Mammary epithelial cell (primary cell): ENCODE measurements at regions of chrX and their contacts with region 1.

Region 1: DNA sequence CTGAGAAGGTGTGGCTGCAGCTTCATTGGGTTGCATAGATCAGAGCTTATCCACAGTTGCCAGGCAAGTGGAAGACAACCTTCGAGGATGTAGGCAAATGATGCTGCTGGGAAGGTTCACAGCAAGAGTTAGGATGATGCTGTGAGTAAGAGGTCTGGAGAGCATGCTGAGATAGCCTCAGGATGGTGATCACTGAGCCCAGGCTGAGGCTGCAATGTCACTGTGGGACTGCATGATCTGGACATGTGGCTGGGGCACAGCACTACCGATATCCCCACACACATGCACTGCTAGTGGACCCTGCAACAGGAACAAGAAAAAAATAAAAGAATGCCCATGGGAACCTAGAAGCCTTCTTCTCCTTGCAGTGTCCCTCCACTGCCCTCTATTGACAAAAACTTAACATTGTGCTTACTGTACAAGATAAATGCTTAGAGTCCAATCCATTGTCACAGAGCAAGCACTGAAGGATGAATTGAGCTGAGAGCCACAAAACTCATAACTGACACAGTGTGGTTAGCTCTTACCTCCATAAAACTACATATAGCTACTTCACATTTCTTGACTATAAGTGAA is 105.6 kb downstream of the CNKSR2 start:
- DNase-seq: peak; percentile 30
- H3K4me3 ChIP-seq: no peak overlapping the region
- H3K27ac ChIP-seq: no peak overlapping the region
- H3K4me1 ChIP-seq: no peaks in the 10 kb centered on the region
- H3K27me3 ChIP-seq: no peaks in the 10 kb centered on the region
- CTCF ChIP-seq: peak; percentile 69 to 78

Region 2: GRCh38 chrX:21374163-21374993 is 105.4 kb before region 1 on chrX and contains the start of gene CNKSR2:
- CTCF ChIA-PET with region 1: no interaction called
- dilution Hi-C with region 1: no loop called
- in situ Hi-C with region 1: no loop called
- intact Hi-C with region 1: loop called (anchors 5 kb)
- DNase-seq: peak; percentile 26
- H3K4me3 ChIP-seq: peak within 1 kb of the TSS; percentile 52 to 60 (median 58)
- H3K27ac ChIP-seq: no peak within 1 kb of the TSS
- H3K4me1 ChIP-seq: no peaks in the 10 kb centered on the region
- H3K27me3 ChIP-seq: no peaks in the 10 kb centered on the region
- CTCF ChIP-seq: no peak
- total RNA-seq, gene CNKSR2: 1.7 to 2.7 TPM

Region 3: DNA sequence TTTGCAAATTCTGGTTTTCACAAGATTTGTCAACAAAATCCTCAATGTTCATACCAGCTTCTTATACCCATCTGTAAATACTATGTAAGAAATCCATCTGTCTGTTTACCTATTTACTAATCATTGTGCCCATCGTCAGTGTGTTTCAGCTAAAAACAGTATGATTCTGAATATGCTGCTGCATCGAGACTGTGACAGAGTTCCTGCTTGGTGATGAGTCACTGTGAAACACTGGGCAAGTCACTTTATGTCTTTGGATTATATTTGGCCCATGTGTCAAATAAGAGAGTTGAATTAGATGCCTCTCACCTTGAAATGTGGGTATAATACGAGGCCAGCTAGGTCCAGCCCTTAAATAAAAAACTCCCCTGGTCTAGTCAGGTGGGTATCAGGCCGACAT is 872.2 kb after region 1 on chrX:
- CTCF ChIA-PET with region 1: no interaction called
- dilution Hi-C with region 1: no loop called
- in situ Hi-C with region 1: no loop called
- intact Hi-C with region 1: no loop called
- DNase-seq: peak; percentile 16
- H3K4me3 ChIP-seq: no peak overlapping the region
- H3K27ac ChIP-seq: no peak overlapping the region
- H3K4me1 ChIP-seq: no peaks in the 10 kb centered on the region
- H3K27me3 ChIP-seq: no peaks in the 10 kb centered on the region
- CTCF ChIP-seq: no peak